ENCODE measurements at regions of chr5 and their contacts with region 1.

Region 1: GRCh38 chr5:41636605-41637004 is 126.2 kb upstream of the PLCXD3 start:
- DNase-seq: no peak
- ATAC-seq: no peak
- H3K4me3 ChIP-seq: no peak overlapping the region
- H3K4me3 Mint-ChIP-seq: no peak overlapping the region
- H3K27ac ChIP-seq: no peak overlapping the region
- H3K27ac Mint-ChIP-seq: no peak overlapping the region
- H3K4me1 ChIP-seq: no peaks in the 10 kb centered on the region
- H3K4me1 Mint-ChIP-seq: no peaks in the 10 kb centered on the region
- H3K27me3 ChIP-seq: no peaks in the 10 kb centered on the region
- H3K27me3 Mint-ChIP-seq: peaks cover 18% of the 10 kb centered on the region
- CTCF ChIP-seq: no peak

Region 2: GRCh38 chr5:41465493-41466171 is 171.0 kb before region 1 on chr5:
- CTCF ChIA-PET with region 1: no interaction called
- POLR2A ChIA-PET with region 1: no interaction called
- intact Hi-C with region 1: no loop called
- DNase-seq: no peak
- ATAC-seq: no peak
- H3K4me3 ChIP-seq: no peak overlapping the region
- H3K4me3 Mint-ChIP-seq: no peak overlapping the region
- H3K27ac ChIP-seq: no peak overlapping the region
- H3K27ac Mint-ChIP-seq: no peak overlapping the region
- H3K4me1 ChIP-seq: no peaks in the 10 kb centered on the region
- H3K4me1 Mint-ChIP-seq: no peaks in the 10 kb centered on the region
- H3K27me3 ChIP-seq: no peaks in the 10 kb centered on the region
- H3K27me3 Mint-ChIP-seq: no peaks in the 10 kb centered on the region
- CTCF ChIP-seq: no peak

Region 3: DNA sequence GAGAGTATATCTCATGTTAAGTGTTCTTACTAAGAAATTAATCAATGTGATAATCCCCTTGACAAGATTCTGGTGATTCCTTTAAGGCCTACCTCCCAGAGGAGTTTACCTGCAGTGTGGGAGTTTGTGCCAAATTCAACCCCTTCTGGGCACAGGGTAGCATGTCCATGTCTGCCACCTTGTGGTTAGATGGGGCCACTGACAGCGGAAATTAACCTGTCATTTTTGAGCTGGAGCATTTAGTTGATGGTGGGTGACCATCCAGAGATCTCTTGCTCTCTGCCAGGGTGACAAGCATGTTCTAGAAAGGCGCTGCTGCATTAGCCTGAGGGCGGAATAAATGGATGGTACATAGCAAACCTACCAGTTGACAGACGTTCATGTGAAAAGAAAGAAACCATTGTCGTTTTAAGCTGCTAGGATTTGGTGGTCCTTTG is 420.7 kb after region 1 on chr5:
- CTCF ChIA-PET with region 1: no interaction called
- POLR2A ChIA-PET with region 1: no interaction called
- intact Hi-C with region 1: loop called in 1 of 2 experiments (anchors 10 kb)
- DNase-seq: peak; percentile 27 to 74 (median 44)
- ATAC-seq: peak; percentile 84
- H3K4me3 ChIP-seq: no peak overlapping the region
- H3K4me3 Mint-ChIP-seq: no peak overlapping the region
- H3K27ac ChIP-seq: no peak overlapping the region
- H3K27ac Mint-ChIP-seq: no peak overlapping the region
- H3K4me1 ChIP-seq: no peaks in the 10 kb centered on the region
- H3K4me1 Mint-ChIP-seq: no peaks in the 10 kb centered on the region
- H3K27me3 ChIP-seq: no peaks in the 10 kb centered on the region
- H3K27me3 Mint-ChIP-seq: peaks cover 10% of the 10 kb centered on the region
- CTCF ChIP-seq: peak; percentile 78